ENCODE measurements at regions of chr12 and their contacts with region 1.

Region 1: DNA sequence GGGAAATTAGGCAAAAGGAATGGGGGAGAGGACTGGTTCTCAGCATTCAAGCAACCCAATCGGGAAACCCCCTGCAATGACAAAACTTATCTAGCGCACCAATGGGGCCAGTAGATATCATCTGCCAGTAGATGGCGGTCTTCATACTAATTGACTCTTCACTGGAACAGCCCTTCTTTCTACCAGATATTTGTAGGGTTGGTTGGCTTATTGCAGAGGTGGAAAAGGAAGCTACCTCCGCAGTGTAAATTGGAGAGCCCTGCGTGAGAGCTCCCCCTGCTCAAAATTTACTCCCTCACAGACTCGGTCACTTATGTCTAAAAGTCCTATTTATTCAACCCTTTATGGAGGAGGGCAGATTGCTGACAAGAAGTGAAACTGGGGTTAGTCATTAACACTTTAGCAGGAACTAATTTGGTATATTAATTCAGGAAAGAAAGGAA is 166.1 kb upstream of the CCND2 start:
- DNase-seq: peak; percentile 90
- ATAC-seq: peak; percentile 91
- H3K4me3 Mint-ChIP-seq: peak overlapping the region; percentile 68
- H3K27ac Mint-ChIP-seq: peak overlapping the region; percentile 95
- H3K4me1 Mint-ChIP-seq: peaks cover 64% of the 10 kb centered on the region
- H3K27me3 Mint-ChIP-seq: peaks cover 6% of the 10 kb centered on the region

Region 2: DNA sequence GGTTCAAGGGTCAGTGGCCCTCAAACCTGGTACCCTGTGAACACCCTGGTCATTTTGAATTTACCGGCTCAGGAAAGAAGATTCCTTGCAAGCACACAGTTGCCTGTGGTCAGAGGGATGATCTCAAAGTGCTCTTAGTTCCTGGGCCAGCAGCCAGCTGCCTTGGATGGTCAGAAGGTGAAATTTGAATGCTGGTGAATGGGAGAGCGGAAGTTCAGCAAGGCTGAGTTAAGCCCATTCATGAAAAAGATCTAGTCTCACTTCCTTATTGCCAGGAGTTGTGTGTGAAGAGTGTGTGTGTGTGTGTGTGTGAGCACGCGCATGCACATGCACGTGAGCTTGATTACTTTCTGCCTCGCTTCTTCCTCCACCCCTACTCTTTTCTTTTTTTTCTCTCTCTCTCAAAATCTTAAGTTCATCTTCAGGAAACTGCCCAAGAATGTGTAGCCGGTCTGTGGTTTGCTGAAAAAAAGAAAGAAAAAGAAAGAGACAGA is 10.6 kb after region 1 on chr12:
- CTCF ChIA-PET with region 1: interaction called, 40 read pairs
- DNase-seq: peak; percentile 47
- ATAC-seq: peak; percentile 30
- H3K4me3 Mint-ChIP-seq: peak overlapping the region; percentile 59
- H3K27ac Mint-ChIP-seq: peak overlapping the region; percentile 89
- H3K4me1 Mint-ChIP-seq: peaks cover 70% of the 10 kb centered on the region
- H3K27me3 Mint-ChIP-seq: no peaks in the 10 kb centered on the region

Region 3: DNA sequence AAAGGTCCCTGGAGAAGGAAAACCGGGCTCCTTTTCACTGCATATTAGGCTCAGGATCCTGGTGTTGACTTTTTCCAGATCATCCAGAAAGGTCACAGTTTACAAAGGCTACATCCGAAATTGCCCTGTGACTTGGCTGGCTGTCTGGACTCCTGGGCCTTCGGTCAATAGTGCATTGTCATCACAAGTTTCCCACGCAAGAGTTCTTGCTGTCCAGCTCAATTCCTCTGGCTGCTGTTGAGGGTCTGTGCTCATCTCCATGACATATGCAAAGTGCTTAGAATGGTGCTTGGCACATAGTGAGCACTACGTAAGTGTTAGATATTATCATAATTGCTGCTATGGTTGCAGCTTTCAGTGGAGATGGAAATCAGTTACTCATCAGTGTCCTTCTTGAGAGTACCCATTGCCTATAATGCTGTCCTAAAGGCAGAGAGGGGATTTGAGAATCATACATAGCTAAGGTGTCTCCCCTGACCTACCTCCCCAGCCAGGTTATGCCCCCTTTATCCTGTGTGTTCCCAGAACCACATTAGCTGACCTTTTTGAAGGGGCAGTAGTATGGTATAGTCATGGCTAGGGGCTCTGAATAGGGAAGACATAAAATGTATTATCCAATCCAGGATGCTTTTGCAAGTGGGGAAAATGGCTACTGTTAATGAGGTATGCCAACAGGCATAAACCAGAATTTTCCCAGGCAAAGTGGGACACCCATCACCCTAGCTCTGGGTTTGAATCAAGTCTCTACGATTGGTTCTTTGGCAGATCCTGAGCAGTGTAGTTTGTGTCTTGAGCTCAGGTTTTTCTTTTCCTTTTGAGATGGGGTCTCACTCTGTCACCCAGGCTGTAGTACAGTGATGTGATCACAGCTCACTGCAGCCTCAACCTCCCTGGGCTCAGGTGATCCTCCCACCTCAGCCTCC is 34.2 kb after region 1 on chr12:
- CTCF ChIA-PET with region 1: interaction called, 49 read pairs
- DNase-seq: peak; percentile 43
- ATAC-seq: no peak
- H3K4me3 Mint-ChIP-seq: no peak overlapping the region
- H3K27ac Mint-ChIP-seq: peak overlapping the region; percentile 94
- H3K4me1 Mint-ChIP-seq: peaks cover 86% of the 10 kb centered on the region
- H3K27me3 Mint-ChIP-seq: no peaks in the 10 kb centered on the region

Region 4: GRCh38 chr12:4148418-4149056 is 41.1 kb after region 1 on chr12:
- CTCF ChIA-PET with region 1: interaction called, 49 read pairs
- DNase-seq: peak; percentile 58
- ATAC-seq: no peak
- H3K4me3 Mint-ChIP-seq: no peak overlapping the region
- H3K27ac Mint-ChIP-seq: peak overlapping the region; percentile 81
- H3K4me1 Mint-ChIP-seq: peaks cover 90% of the 10 kb centered on the region
- H3K27me3 Mint-ChIP-seq: no peaks in the 10 kb centered on the region

Region 5: GRCh38 chr12:4164559-4165558 is 57.4 kb after region 1 on chr12:
- CTCF ChIA-PET with region 1: interaction called, 13 read pairs
- DNase-seq: peak; percentile 81
- ATAC-seq: peak; percentile 93
- H3K4me3 Mint-ChIP-seq: peak overlapping the region; percentile 75
- H3K27ac Mint-ChIP-seq: peak overlapping the region; percentile 93
- H3K4me1 Mint-ChIP-seq: peaks cover 51% of the 10 kb centered on the region
- H3K27me3 Mint-ChIP-seq: no peaks in the 10 kb centered on the region

Measured in activated CD8-positive, alpha-beta memory T cell treated with anti-CD3 and anti-CD28 coated beads, Interleukin-2, amount 10 ng/mL, durations not matched to agents 7 days and 5 days (primary cell).